ENCODE measurements at regions of chr4 and their contacts with region 1.

Region 1: DNA sequence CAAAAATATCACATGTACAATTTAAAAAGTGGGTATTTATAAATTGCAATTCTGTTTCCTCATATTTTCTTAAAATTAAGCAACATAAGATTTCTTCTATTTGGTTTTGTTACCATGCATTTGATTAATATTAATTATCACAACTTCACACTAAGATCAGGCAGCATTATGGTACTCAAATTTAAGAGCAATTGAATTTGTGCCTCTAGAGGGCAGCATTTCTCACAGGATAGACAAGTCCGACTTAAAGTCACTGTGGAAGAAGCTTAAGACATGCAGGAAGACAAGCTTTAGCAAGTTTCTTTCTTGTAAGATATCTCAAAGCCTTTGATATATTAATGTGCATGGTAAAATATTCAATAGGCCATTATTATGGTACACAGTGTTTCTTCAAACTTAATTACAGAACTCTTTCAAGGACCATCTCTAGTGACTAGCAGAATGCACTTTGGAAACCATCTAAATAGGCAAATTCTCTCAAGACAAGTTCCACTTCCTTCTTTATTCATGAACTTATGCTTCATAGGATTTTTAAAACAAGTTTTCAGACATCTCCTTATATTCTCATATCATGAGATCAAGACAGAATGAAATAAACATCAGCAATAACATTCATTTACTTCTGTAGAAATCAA is 35.0 kb downstream of the FBXW7 start:
- DNase-seq: peak; percentile 69
- ATAC-seq: peak; percentile 81
- H3K4me3 Mint-ChIP-seq: no peak overlapping the region
- H3K27ac Mint-ChIP-seq: no peak overlapping the region
- H3K4me1 Mint-ChIP-seq: peaks cover 26% of the 10 kb centered on the region
- H3K27me3 Mint-ChIP-seq: no peaks in the 10 kb centered on the region

Region 2: GRCh38 chr4:152454398-152455011 is 46.4 kb before region 1 on chr4:
- CTCF ChIA-PET with region 1: interaction called, 16 read pairs
- DNase-seq: no peak
- ATAC-seq: no peak
- H3K4me3 Mint-ChIP-seq: no peak overlapping the region
- H3K27ac Mint-ChIP-seq: no peak overlapping the region
- H3K4me1 Mint-ChIP-seq: peaks cover 37% of the 10 kb centered on the region
- H3K27me3 Mint-ChIP-seq: no peaks in the 10 kb centered on the region

Region 3: DNA sequence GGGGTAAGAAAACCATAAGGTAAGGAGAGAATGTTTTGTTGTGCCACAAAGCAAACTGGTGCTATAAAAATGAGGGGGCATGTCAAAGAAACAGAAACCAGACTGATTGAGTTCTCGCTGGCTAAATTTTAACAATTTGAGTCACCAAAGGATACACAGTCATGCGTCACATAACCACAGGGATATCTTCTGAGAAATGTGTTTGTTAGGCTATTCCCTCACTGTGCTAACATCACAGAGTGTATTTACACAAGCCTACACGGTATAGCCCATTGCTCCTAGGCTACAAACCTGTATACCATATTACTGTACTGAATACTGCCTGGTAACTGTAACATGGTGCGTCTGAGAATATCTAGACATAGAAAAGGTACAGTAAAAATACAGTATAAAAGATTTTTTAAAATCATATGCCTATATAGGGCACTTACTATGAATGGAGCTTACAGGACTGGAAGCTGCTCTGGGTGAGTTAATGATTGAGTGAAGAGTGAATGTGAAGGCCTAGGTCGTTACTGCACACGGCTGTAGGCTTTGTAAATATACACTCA is 15.1 kb before region 1 on chr4:
- CTCF ChIA-PET with region 1: interaction called, 17 read pairs
- DNase-seq: peak; percentile 66
- ATAC-seq: peak; percentile 100
- H3K4me3 Mint-ChIP-seq: peak overlapping the region; percentile 59
- H3K27ac Mint-ChIP-seq: peak overlapping the region; percentile 84
- H3K4me1 Mint-ChIP-seq: peaks cover 45% of the 10 kb centered on the region
- H3K27me3 Mint-ChIP-seq: no peaks in the 10 kb centered on the region

Region 4: GRCh38 chr4:152522754-152523153 is 21.8 kb after region 1 on chr4:
- CTCF ChIA-PET with region 1: interaction called, 15 read pairs
- DNase-seq: no peak
- ATAC-seq: no peak
- H3K4me3 Mint-ChIP-seq: no peak overlapping the region
- H3K27ac Mint-ChIP-seq: no peak overlapping the region
- H3K4me1 Mint-ChIP-seq: peaks cover 53% of the 10 kb centered on the region
- H3K27me3 Mint-ChIP-seq: no peaks in the 10 kb centered on the region

Region 5: GRCh38 chr4:152535903-152536544 is 35.1 kb after region 1 on chr4 and contains the start of gene FBXW7:
- CTCF ChIA-PET with region 1: interaction called, 17 read pairs
- DNase-seq: peak; percentile 100
- ATAC-seq: peak; percentile 85
- H3K4me3 Mint-ChIP-seq: peak within 1 kb of the TSS; percentile 85
- H3K27ac Mint-ChIP-seq: peak within 1 kb of the TSS; percentile 98
- H3K4me1 Mint-ChIP-seq: peaks cover 52% of the 10 kb centered on the region
- H3K27me3 Mint-ChIP-seq: no peaks in the 10 kb centered on the region
- total RNA-seq, gene FBXW7: 49.3 to 62.9 TPM

Region 6: GRCh38 chr4:152640058-152640833 is 139.3 kb after region 1 on chr4:
- CTCF ChIA-PET with region 1: interaction called, 150 read pairs
- DNase-seq: no peak
- ATAC-seq: peak; percentile 34
- H3K4me3 Mint-ChIP-seq: no peak overlapping the region
- H3K27ac Mint-ChIP-seq: no peak overlapping the region
- H3K4me1 Mint-ChIP-seq: peaks cover 29% of the 10 kb centered on the region
- H3K27me3 Mint-ChIP-seq: no peaks in the 10 kb centered on the region

Region 7: GRCh38 chr4:152735396-152735859 is 234.5 kb after region 1 on chr4:
- CTCF ChIA-PET with region 1: interaction called, 43 read pairs
- DNase-seq: no peak
- ATAC-seq: peak; percentile 60
- H3K4me3 Mint-ChIP-seq: no peak overlapping the region
- H3K27ac Mint-ChIP-seq: no peak overlapping the region
- H3K4me1 Mint-ChIP-seq: peaks cover 4% of the 10 kb centered on the region
- H3K27me3 Mint-ChIP-seq: peaks cover 6% of the 10 kb centered on the region

Measured in activated CD8-positive, alpha-beta memory T cell treated with anti-CD3 and anti-CD28 coated beads, Interleukin-2, amount 10 ng/mL, durations not matched to agents 7 days and 5 days (primary cell).